Adrenal gland (tissue), 19 donors: ENCODE measurements at regions of chr18 and their contacts with region 1.

Region 1: GRCh38 chr18:75478996-75479880 is 51.7 kb upstream of the SMIM21 start:
- DNase-seq: peak in 1 of 7 donors; percentile 15
- H3K4me3 ChIP-seq: no peak overlapping the region
- H3K27ac ChIP-seq: no peak overlapping the region
- H3K4me1 ChIP-seq: no peaks in the 10 kb centered on the region
- H3K27me3 ChIP-seq: no peaks in the 10 kb centered on the region
- CTCF ChIP-seq: peak; percentile 55 to 71 (median 63)
- POLR2A ChIP-seq: no peak

Region 2: DNA sequence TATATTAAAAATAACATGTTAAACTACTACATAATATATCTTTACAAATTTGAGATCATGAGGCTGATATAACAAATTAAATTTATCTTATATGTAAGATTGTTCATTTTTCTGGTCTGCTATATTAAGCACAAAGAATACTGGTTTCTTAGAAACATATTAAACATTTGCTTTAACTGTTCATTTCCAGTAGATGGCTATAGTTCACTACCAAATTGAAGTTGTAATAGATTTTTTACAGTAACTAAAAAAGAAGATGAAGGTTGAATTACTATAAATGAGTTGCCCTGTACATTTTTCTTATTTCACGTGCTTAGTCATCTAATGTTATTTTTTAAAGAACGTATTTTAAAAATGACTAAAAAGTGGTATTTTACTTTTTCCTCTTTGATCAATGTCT is 824.6 kb before region 1 on chr18:
- intact Hi-C with region 1: loop called in 1 of 2 experiments (anchors 5 kb)
- DNase-seq: no peak
- H3K4me3 ChIP-seq: no peak overlapping the region
- H3K27ac ChIP-seq: no peak overlapping the region
- H3K4me1 ChIP-seq: no peaks in the 10 kb centered on the region
- H3K27me3 ChIP-seq: no peaks in the 10 kb centered on the region
- CTCF ChIP-seq: peak in 4 of 6 experiments; percentile 6 to 45 (median 30)
- POLR2A ChIP-seq: no peak